SK-N-SH (cell line): ENCODE measurements at regions of chr6 and their contacts with region 1.

Region 1: GRCh38 chr6:31827286-31828079 is at the start of gene HSPA1B:
- DNase-seq: peak; percentile 87
- H3K4me3 ChIP-seq: peak within 1 kb of the TSS; percentile 54 to 62
- H3K27ac ChIP-seq: peak within 1 kb of the TSS; percentile 86 to 90
- H3K4me1 ChIP-seq: peaks cover 7 to 10% of the 10 kb centered on the region in 2 experiments; a peak in 2 of 4 replicates
- H3K27me3 ChIP-seq: no peaks in the 10 kb centered on the region
- CTCF ChIP-seq: no peak
- EP300 ChIP-seq: peak in 1 of 2 experiments; percentile 91; a peak in 2 of 4 replicates
- RAD21 ChIP-seq: no peak
- polyA plus RNA-seq, gene HSPA1B: 52.4 and 96.3 TPM in 2 replicates

Region 2: DNA sequence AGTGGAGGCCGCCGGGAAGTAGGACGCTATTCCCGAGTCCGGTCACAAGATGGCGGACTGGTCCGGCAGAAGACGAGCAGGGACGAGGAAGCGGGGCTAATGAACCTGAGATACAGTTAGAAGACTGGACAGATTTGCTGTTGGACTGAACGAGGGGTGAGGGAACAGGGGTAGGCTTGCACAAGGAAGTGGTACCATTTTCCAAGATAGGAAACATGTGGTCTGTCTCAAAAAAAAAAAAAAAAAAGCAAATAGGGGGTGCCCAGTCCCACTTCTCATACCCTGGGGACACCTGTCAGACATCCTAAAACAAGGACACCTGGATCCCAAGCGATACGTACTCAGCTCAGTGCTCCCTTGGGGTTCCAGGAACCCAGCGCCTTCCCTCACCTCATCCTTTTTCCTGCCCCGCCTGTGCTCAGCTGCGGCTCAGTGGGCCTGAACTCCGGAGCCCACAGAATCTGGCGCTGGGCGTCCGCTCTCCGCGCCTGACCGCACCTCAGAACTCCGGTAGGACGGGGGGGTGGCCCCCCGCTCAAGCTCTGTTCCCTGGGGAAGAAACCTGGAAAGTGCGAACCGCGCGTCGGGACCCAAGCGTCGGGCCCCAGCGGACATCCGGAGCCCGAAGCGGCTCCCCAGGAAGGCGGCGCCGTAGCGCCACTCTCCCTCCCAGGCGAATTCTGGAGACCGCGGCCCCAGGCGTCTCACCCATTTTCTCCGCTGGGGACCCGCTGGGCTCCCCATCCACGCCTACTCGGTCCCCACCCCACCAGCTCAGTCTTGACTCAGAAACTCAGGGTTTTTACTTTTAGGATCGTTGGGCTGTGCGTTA is 146.4 kb before region 1 on chr6 and contains the start of gene LY6G5C:
- CTCF ChIA-PET with region 1: interaction called, 24 read pairs
- POLR2A ChIA-PET with region 1: no interaction called
- DNase-seq: peak; percentile 88
- H3K4me3 ChIP-seq: peak within 1 kb of the TSS in 1 of 2 experiments; percentile 31; a peak in 1 of 4 replicates
- H3K27ac ChIP-seq: peak within 1 kb of the TSS in 1 of 2 experiments; percentile 31; a peak in 1 of 4 replicates
- H3K4me1 ChIP-seq: peaks cover 3 to 7% of the 10 kb centered on the region in 2 experiments; a peak in 2 of 4 replicates
- H3K27me3 ChIP-seq: no peaks in the 10 kb centered on the region
- CTCF ChIP-seq: peak; percentile 69
- EP300 ChIP-seq: no peak
- RAD21 ChIP-seq: peak; percentile 96
- polyA plus RNA-seq, gene LY6G5C: 0.60 and 1.1 TPM in 2 replicates

Region 3: GRCh38 chr6:31729515-31729978 is 97.9 kb before region 1 on chr6:
- CTCF ChIA-PET with region 1: interaction called, 45 read pairs
- POLR2A ChIA-PET with region 1: interaction called, 10 read pairs
- DNase-seq: peak; percentile 93
- H3K4me3 ChIP-seq: peak overlapping the region; percentile 90 to 93
- H3K27ac ChIP-seq: peak overlapping the region; percentile 94
- H3K4me1 ChIP-seq: peaks cover 18 to 21% of the 10 kb centered on the region in 2 experiments; a peak in 2 of 4 replicates
- H3K27me3 ChIP-seq: no peaks in the 10 kb centered on the region
- CTCF ChIP-seq: no peak
- EP300 ChIP-seq: no peak
- RAD21 ChIP-seq: peak; percentile 79

Region 4: DNA sequence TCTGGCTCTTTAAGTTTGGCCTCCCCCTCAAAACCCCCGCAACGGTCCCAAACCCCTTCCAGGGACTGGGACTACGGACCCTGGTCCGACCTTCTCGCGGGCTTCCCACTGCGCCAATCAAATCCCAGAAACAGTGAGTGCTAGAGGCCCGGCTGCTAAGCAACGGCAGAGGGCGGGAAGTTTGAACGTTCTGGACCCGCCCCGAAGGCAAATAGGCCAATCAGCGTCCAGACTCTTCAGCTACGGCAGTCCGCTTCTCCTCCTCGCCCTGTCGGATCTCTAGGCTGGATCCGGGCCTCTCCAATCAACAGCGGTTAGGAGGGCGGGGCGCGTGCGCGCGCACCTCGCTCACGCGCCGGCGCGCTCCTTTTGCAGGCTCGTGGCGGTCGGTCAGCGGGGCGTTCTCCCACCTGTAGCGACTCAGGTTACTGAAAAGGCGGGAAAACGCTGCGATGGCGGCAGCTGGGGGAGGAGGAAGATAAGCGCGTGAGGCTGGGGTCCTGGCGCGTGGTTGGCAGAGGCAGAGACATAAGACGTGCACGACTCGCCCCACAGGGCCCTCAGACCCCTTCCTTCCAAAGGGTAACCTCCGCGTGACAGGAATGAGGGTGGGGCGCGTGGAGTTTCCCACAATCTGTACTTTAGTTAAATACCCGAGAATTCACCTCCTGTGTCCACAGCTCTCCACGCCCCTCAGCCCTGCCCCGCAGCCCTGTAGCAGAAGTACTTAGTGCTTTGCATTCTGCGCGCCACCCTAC is 87.7 kb before region 1 on chr6 and contains the start of gene MSH5:
- CTCF ChIA-PET with region 1: interaction called, 23 read pairs
- POLR2A ChIA-PET with region 1: interaction called, 6 read pairs
- DNase-seq: peak; percentile 95
- H3K4me3 ChIP-seq: peak within 1 kb of the TSS; percentile 77 to 83
- H3K27ac ChIP-seq: peak within 1 kb of the TSS; percentile 75 to 88
- H3K4me1 ChIP-seq: peaks cover 15 to 24% of the 10 kb centered on the region in 2 experiments; a peak in 3 of 4 replicates
- H3K27me3 ChIP-seq: no peaks in the 10 kb centered on the region
- CTCF ChIP-seq: no peak
- EP300 ChIP-seq: no peak
- RAD21 ChIP-seq: no peak
- polyA plus RNA-seq, gene MSH5: 16.0 and 19.5 TPM in 2 replicates

Region 5: DNA sequence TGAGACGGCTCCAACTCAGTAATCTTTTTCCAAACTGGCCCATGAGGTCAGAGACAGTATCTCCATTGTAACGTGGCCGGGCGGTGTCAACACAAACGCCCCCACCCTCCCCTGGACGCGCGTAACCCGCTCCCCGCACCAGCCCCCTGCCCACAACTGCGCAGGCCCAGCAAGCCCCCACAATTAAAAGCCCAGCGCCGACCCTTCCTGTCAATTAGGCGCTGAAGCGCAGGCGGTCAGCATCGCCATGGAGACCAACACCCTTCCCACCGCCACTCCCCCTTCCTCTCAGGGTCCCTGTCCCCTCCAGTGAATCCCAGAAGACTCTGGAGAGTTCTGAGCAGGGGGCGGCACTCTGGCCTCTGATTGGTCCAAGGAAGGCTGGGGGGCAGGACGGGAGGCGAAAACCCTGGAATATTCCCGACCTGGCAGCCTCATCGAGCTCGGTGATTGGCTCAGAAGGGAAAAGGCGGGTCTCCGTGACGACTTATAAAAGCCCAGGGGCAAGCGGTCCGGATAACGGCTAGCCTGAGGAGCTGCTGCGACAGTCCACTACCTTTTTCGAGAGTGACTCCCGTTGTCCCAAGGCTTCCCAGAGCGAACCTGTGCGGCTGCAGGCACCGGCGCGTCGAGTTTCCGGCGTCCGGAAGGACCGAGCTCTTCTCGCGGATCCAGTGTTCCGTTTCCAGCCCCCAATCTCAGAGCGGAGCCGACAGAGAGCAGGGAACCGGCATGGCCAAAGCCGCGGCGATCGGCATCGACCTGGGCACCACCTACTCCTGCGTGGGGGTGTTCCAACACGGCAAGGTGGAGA is 12.3 kb before region 1 on chr6 and contains the starts of genes HSPA1A and HSPA1L:
- CTCF ChIA-PET with region 1: interaction called, 27 read pairs
- POLR2A ChIA-PET with region 1: interaction called, 9 read pairs
- DNase-seq: peak; percentile 94
- H3K4me3 ChIP-seq: peak within 1 kb of the TSS; percentile 62 to 79
- H3K27ac ChIP-seq: peak within 1 kb of the TSS; percentile 98
- H3K4me1 ChIP-seq: peaks cover 4 to 6% of the 10 kb centered on the region in 2 experiments; a peak in 2 of 4 replicates
- H3K27me3 ChIP-seq: no peaks in the 10 kb centered on the region
- CTCF ChIP-seq: no peak
- EP300 ChIP-seq: peak in 1 of 2 experiments; percentile 98; a peak in 2 of 4 replicates
- RAD21 ChIP-seq: no peak
- polyA plus RNA-seq, gene HSPA1A: 71.1 and 119 TPM in 2 replicates
- polyA plus RNA-seq, gene HSPA1L: 0.69 and 0.83 TPM in 2 replicates

Region 6: GRCh38 chr6:31844507-31844906 is 17.0 kb after region 1 on chr6:
- CTCF ChIA-PET with region 1: no interaction called
- POLR2A ChIA-PET with region 1: no interaction called
- DNase-seq: no peak
- H3K4me3 ChIP-seq: no peak overlapping the region
- H3K27ac ChIP-seq: no peak overlapping the region
- H3K4me1 ChIP-seq: no peaks in the 10 kb centered on the region
- H3K27me3 ChIP-seq: no peaks in the 10 kb centered on the region
- CTCF ChIP-seq: no peak
- EP300 ChIP-seq: no peak
- RAD21 ChIP-seq: no peak